Posterior vena cava (tissue), 2 donors: ENCODE measurements at regions of chr10 and their contacts with region 1.

Region 1: GRCh38 chr10:132637477-132638129 is 100.0 kb downstream of the INPP5A start:
- DNase-seq: no peak

Region 2: GRCh38 chr10:132387764-132388210 is 249.8 kb before region 1 on chr10:
- intact Hi-C with region 1: loop called (anchors 10 kb)
- DNase-seq: peak; percentile 94

Region 3: GRCh38 chr10:132396495-132397035 is 241.0 kb before region 1 on chr10:
- intact Hi-C with region 1: loop called in 1 of 2 experiments (anchors 10 kb)
- DNase-seq: no peak

Region 4: GRCh38 chr10:132458593-132459300 is 178.9 kb before region 1 on chr10:
- intact Hi-C with region 1: loop called (anchors 2 kb)
- DNase-seq: no peak

Region 5: DNA sequence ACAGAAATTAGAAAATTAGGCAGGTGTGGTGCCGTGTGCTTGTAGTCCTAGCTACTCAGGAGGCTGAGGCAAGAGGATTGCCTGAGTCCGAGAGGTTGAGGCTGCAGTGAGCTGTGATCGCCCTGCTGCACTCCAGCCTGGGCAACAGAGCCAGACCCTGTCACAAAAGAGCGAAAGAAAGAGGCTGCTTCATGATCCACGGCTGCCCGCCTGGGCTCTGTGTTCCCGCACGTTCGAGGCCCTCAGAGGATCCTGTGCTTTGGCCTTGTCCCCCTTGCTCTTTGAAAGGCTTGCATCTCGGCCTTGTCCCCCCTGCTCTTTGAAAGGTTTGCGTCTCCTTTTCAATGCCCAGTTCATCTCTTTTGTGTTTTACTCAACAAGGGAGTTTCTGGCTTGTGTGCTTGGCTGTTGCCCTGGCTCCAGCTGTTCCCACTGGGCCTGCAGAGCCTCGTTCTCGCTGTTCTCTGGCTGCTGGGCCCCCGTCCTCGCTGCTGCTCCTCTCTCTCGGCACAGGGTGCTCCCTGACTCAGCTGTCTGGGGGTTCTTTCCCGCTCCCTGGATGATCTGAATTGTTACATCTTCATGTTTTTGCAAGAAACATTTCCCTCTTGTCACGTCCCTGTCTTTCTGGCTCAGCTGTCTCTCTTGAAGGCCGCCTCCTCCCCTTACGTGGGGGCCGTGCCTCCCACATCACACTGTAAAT is 145.1 kb before region 1 on chr10:
- intact Hi-C with region 1: loop called in 1 of 2 experiments (anchors 10 kb)
- DNase-seq: peak; percentile 84

Region 6: GRCh38 chr10:132516771-132517725 is 120.6 kb before region 1 on chr10:
- intact Hi-C with region 1: loop called in 1 of 2 experiments (anchors 5 kb)
- DNase-seq: peak; percentile 98

Region 7: GRCh38 chr10:133309111-133309719 is 671.6 kb after region 1 on chr10:
- intact Hi-C with region 1: no loop called
- DNase-seq: peak; percentile 99